Endothelial cell of umbilical vein (primary cell): ENCODE measurements at regions of chr13 and their contacts with region 1.

Region 1: GRCh38 chr13:94549232-94550061 is 46.5 kb downstream of the TGDS start:
- DNase-seq: peak; percentile 96
- H3K4me3 ChIP-seq: peak overlapping the region; percentile 57 to 84 (median 81)
- H3K27ac ChIP-seq: peak overlapping the region; percentile 68
- H3K4me1 ChIP-seq: peaks cover 6% of the 10 kb centered on the region
- H3K27me3 ChIP-seq: no peaks in the 10 kb centered on the region
- CTCF ChIP-seq: no peak
- POLR2A ChIP-seq: peak; percentile 49

Region 2: DNA sequence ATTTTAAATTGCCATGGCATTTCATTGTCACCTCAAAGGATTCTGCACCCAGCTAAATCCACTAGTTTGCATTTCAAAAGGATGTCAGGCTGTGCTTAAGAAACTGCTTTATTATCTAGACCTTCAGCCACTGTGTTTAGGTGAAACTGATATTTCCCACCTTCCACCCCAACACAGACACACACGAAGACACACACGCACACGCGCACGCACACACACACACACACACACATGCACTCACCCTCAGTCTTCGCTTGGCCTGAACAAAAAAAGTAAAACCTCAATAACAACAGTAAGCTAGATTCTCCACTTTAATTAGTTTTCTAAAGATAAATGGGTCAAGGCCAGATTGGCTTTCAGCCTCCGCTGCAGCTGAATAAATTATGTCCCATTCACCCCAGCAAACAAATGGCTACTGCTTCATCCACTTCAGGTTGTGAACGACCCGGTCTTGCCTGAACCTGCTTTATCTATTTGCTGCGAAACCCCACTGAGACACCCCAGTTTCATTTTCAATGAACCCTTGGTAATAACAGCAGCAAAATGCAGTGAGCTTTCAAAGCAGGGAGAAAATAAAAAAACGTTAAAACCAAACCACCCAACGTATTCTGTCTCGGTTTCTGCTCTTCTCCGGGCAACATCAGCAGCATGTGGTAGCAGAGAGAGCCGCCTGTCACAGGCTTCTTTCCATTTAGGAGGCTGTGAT is 236.8 kb before region 1 on chr13:
- CTCF ChIA-PET with region 1: no interaction called
- POLR2A ChIA-PET with region 1: no interaction called
- dilution Hi-C with region 1: no loop called
- intact Hi-C with region 1: loop called (anchors 5 kb)
- DNase-seq: no peak
- H3K4me3 ChIP-seq: no peak overlapping the region
- H3K27ac ChIP-seq: peak overlapping the region; percentile 88
- H3K4me1 ChIP-seq: peaks cover 39% of the 10 kb centered on the region
- H3K27me3 ChIP-seq: no peaks in the 10 kb centered on the region
- CTCF ChIP-seq: no peak
- POLR2A ChIP-seq: no peak

Region 3: GRCh38 chr13:94435604-94436226 is 113.7 kb before region 1 on chr13:
- CTCF ChIA-PET with region 1: interaction called, 11 read pairs
- POLR2A ChIA-PET with region 1: no interaction called
- dilution Hi-C with region 1: no loop called
- intact Hi-C with region 1: loop called (anchors 5 kb)
- DNase-seq: peak; percentile 43
- H3K4me3 ChIP-seq: no peak overlapping the region
- H3K27ac ChIP-seq: no peak overlapping the region
- H3K4me1 ChIP-seq: no peaks in the 10 kb centered on the region
- H3K27me3 ChIP-seq: peaks cover 15 to 18% of the 10 kb centered on the region in 2 experiments
- CTCF ChIP-seq: peak; percentile 27 to 35
- POLR2A ChIP-seq: no peak

Region 4: GRCh38 chr13:94560116-94560515 is 10.7 kb after region 1 on chr13:
- CTCF ChIA-PET with region 1: interaction called, 10 read pairs
- POLR2A ChIA-PET with region 1: no interaction called
- dilution Hi-C with region 1: no loop called
- intact Hi-C with region 1: no loop called
- DNase-seq: no peak
- H3K4me3 ChIP-seq: no peak overlapping the region
- H3K27ac ChIP-seq: no peak overlapping the region
- H3K4me1 ChIP-seq: no peaks in the 10 kb centered on the region
- H3K27me3 ChIP-seq: no peaks in the 10 kb centered on the region
- CTCF ChIP-seq: no peak
- POLR2A ChIP-seq: no peak

Region 5: GRCh38 chr13:94595950-94596574 is 46.6 kb after region 1 on chr13 and contains the start of gene TGDS:
- CTCF ChIA-PET with region 1: interaction called, 10 read pairs
- POLR2A ChIA-PET with region 1: interaction called, 4 read pairs
- dilution Hi-C with region 1: no loop called
- intact Hi-C with region 1: loop called (anchors 1 kb)
- DNase-seq: peak; percentile 85
- H3K4me3 ChIP-seq: peak within 1 kb of the TSS; percentile 60 to 86 (median 73)
- H3K27ac ChIP-seq: peak within 1 kb of the TSS; percentile 37
- H3K4me1 ChIP-seq: peaks cover 16% of the 10 kb centered on the region
- H3K27me3 ChIP-seq: no peaks in the 10 kb centered on the region
- CTCF ChIP-seq: peak in 1 of 2 donors; percentile 12
- POLR2A ChIP-seq: peak; percentile 93
- total RNA-seq, gene TGDS: 8.7 and 9.3 TPM in 2 replicates

Region 6: GRCh38 chr13:94601446-94602431 is 52.3 kb after region 1 on chr13 and contains the start of gene GPR180:
- CTCF ChIA-PET with region 1: interaction called, 10 read pairs
- POLR2A ChIA-PET with region 1: no interaction called
- dilution Hi-C with region 1: no loop called
- intact Hi-C with region 1: loop called (anchors 1 kb)
- DNase-seq: peak; percentile 99
- H3K4me3 ChIP-seq: peak within 1 kb of the TSS; percentile 66 to 94 (median 92)
- H3K27ac ChIP-seq: peak within 1 kb of the TSS; percentile 68
- H3K4me1 ChIP-seq: peaks cover 11% of the 10 kb centered on the region
- H3K27me3 ChIP-seq: no peaks in the 10 kb centered on the region
- CTCF ChIP-seq: no peak
- POLR2A ChIP-seq: peak; percentile 85
- total RNA-seq, gene GPR180: 8.3 and 8.9 TPM in 2 replicates